Posterior cingulate gyrus (tissue), 11 donors: ENCODE measurements at regions of chr7 and their contacts with region 1.

Region 1: GRCh38 chr7:25389489-25390106 is 161.3 kb upstream of the NPVF start:
- DNase-seq: no peak

Region 2: GRCh38 chr7:25028370-25029021 is 361.1 kb before region 1 on chr7:
- intact Hi-C with region 1: no loop called
- DNase-seq: no peak

Region 3: GRCh38 chr7:25496476-25497368 is 107.1 kb after region 1 on chr7:
- intact Hi-C with region 1: no loop called
- DNase-seq: no peak

Region 4: DNA sequence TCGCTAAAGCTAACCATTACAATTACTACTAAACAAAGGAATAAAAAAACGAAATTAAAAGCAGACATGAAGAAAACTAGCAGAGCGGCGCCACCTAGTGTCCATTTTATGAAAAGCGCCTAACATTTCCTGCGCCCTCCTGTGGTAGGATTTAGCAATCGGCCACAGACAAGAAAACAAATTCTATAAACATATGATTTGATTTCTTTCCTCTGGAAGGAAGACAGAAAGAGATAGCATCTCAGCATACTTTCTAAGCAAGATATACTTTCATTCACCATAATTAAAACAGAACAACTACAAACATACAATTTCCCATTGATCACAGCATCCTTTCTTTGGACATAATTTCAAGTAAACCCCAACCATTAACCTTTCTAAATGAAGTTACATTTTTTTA is 176.4 kb after region 1 on chr7:
- intact Hi-C with region 1: loop called (anchors 1 kb)
- DNase-seq: peak in 9 of 10 donors; percentile 36 to 90 (median 59)